CD8-positive, alpha-beta T cell (primary cell): ENCODE measurements at regions of chr1 and their contacts with region 1.

Region 1: GRCh38 chr1:18956369-18957135 is at the start of gene IFFO2:
- DNase-seq: peak; percentile 96 to 100 (median 98)
- ATAC-seq: peak; percentile 82
- H3K4me3 ChIP-seq: peak within 1 kb of the TSS; percentile 66 to 80
- H3K4me3 Mint-ChIP-seq: peak within 1 kb of the TSS; percentile 96
- H3K27ac ChIP-seq: peak within 1 kb of the TSS; percentile 36 to 52
- H3K27ac Mint-ChIP-seq: peak within 1 kb of the TSS; percentile 97
- H3K4me1 ChIP-seq: peaks cover 57% of the 10 kb centered on the region
- H3K4me1 Mint-ChIP-seq: peaks cover 59% of the 10 kb centered on the region
- H3K27me3 ChIP-seq: peaks cover 0 to 2% of the 10 kb centered on the region in 2 experiments
- H3K27me3 Mint-ChIP-seq: no peaks in the 10 kb centered on the region
- CTCF ChIP-seq: no peak
- total RNA-seq, gene IFFO2: 92.6 to 107 TPM

Region 2: DNA sequence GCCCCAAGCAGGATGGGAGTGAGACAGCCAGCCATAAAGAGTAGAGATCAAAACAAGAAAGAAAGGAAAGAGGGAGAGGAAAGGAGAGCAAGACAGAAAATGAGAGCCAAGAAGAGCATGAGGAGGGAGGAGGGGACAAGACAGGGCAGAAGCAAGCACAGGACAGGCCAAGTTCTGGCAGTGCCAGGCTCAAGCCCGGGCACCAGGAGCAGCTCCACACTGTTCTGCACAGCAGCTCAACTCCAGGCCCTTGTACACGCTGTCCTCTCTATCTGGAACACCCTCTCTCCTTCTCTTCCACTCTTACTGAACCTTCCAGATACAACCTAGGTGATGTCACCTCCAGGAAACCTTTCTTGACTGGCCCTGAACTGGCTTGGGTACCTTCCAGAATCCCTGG is 11.7 kb before region 1 on chr1:
- CTCF ChIA-PET with region 1: interaction called, 3 read pairs
- POLR2A ChIA-PET with region 1: interaction called, 12 read pairs
- intact Hi-C with region 1: loop called in 1 of 2 experiments (anchors 1 kb)
- DNase-seq: no peak
- ATAC-seq: no peak
- H3K4me3 ChIP-seq: no peak overlapping the region
- H3K4me3 Mint-ChIP-seq: no peak overlapping the region
- H3K27ac ChIP-seq: no peak overlapping the region
- H3K27ac Mint-ChIP-seq: no peak overlapping the region
- H3K4me1 ChIP-seq: peaks cover 82% of the 10 kb centered on the region
- H3K4me1 Mint-ChIP-seq: peaks cover 86% of the 10 kb centered on the region
- H3K27me3 ChIP-seq: no peaks in the 10 kb centered on the region
- H3K27me3 Mint-ChIP-seq: no peaks in the 10 kb centered on the region
- CTCF ChIP-seq: no peak

Region 3: GRCh38 chr1:18972531-18972930 is 16.0 kb after region 1 on chr1:
- CTCF ChIA-PET with region 1: interaction called, 47 read pairs
- POLR2A ChIA-PET with region 1: interaction called, 7 read pairs
- intact Hi-C with region 1: no loop called
- DNase-seq: peak in 4 of 9 experiments; percentile 27 to 73 (median 52)
- ATAC-seq: peak; percentile 61
- H3K4me3 ChIP-seq: no peak overlapping the region
- H3K4me3 Mint-ChIP-seq: no peak overlapping the region
- H3K27ac ChIP-seq: no peak overlapping the region
- H3K27ac Mint-ChIP-seq: no peak overlapping the region
- H3K4me1 ChIP-seq: peaks cover 3% of the 10 kb centered on the region
- H3K4me1 Mint-ChIP-seq: peaks cover 4% of the 10 kb centered on the region
- H3K27me3 ChIP-seq: no peaks in the 10 kb centered on the region
- H3K27me3 Mint-ChIP-seq: peaks cover 7% of the 10 kb centered on the region
- CTCF ChIP-seq: peak; percentile 59

Region 4: DNA sequence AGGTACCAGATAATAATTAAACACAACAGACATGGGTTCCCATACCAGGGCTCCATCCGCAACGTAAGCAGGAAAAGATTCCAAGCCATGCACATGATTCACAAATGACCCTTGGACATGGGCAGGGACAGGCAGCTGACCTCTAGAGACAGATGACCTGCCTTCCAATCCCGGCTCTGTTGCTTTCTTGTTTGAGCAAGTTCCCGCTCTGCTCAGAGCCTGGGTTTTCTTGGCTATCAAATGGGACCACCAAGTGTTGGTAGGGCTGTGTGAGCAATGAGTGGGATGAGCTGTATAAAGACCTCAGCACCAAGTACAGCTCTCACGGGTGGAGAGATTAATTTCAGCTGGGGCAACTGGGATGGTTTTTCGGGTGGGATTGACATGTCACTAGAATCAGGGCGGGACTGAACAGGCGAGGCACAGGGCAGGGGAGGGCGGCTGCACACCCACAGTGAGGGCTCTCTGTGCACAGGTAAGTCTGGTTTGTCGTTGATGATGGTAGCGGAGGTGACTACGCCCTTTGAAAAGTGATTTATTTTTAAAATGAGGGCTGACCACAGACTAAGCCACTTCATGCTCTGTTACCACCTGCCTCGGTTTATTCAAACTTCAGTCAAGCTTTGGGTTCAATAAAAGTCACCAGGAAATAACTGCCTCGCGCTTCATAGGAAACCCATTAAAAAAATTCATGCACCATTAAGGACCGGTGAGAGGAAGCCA is 57.4 kb after region 1 on chr1:
- CTCF ChIA-PET with region 1: no interaction called
- POLR2A ChIA-PET with region 1: no interaction called
- intact Hi-C with region 1: no loop called
- DNase-seq: peak in 1 of 9 experiments; percentile 19
- ATAC-seq: no peak
- H3K4me3 ChIP-seq: no peak overlapping the region
- H3K4me3 Mint-ChIP-seq: no peak overlapping the region
- H3K27ac ChIP-seq: no peak overlapping the region
- H3K27ac Mint-ChIP-seq: no peak overlapping the region
- H3K4me1 ChIP-seq: peaks cover 17% of the 10 kb centered on the region
- H3K4me1 Mint-ChIP-seq: peaks cover 28% of the 10 kb centered on the region
- H3K27me3 ChIP-seq: peaks cover 0 to 2% of the 10 kb centered on the region in 2 experiments
- H3K27me3 Mint-ChIP-seq: peaks cover 2% of the 10 kb centered on the region
- CTCF ChIP-seq: no peak

Region 5: GRCh38 chr1:19074902-19075721 is 118.6 kb after region 1 on chr1:
- CTCF ChIA-PET with region 1: no interaction called
- POLR2A ChIA-PET with region 1: interaction called, 9 read pairs
- intact Hi-C with region 1: loop called (anchors 2 kb)
- DNase-seq: peak in 1 of 9 experiments; percentile 23
- ATAC-seq: peak; percentile 24
- H3K4me3 ChIP-seq: peak overlapping the region; percentile 16 to 21
- H3K4me3 Mint-ChIP-seq: peak overlapping the region; percentile 56
- H3K27ac ChIP-seq: peak overlapping the region in 1 of 2 experiments; percentile 52
- H3K27ac Mint-ChIP-seq: peak overlapping the region; percentile 69
- H3K4me1 ChIP-seq: peaks cover 46% of the 10 kb centered on the region
- H3K4me1 Mint-ChIP-seq: peaks cover 41% of the 10 kb centered on the region
- H3K27me3 ChIP-seq: no peaks in the 10 kb centered on the region
- H3K27me3 Mint-ChIP-seq: no peaks in the 10 kb centered on the region
- CTCF ChIP-seq: no peak

Region 6: DNA sequence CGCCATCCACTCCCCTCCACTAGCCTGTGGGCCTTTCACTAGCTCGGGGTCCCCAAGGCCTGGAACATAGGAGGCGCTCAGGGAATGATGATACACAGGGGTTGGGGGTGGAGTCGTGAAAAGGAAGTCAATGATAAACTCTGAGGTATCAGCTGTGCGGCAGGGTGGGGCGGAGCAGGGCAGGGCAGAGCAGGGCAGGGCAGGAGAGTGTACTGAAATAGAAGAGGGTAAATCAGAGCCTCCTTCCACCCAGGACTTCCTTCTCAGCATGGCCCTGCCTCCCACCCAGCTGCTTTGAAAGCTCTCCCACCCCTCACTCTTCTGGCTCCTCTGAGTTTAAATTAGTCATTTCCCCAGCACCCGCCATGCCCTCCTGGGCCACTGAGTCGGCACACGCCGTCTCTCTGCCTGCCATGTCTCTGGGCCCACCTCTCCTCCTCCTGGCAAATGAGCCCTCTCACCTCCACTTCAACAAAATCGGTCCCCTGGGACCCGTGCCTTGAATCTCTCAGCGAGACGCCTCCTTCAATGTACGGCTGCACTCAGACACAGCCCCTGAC is 511.9 kb after region 1 on chr1:
- CTCF ChIA-PET with region 1: no interaction called
- POLR2A ChIA-PET with region 1: no interaction called
- intact Hi-C with region 1: loop called (anchors 10 kb)
- DNase-seq: peak; percentile 19 to 85 (median 74)
- ATAC-seq: peak; percentile 85
- H3K4me3 ChIP-seq: peak overlapping the region in 1 of 2 experiments; percentile 41
- H3K4me3 Mint-ChIP-seq: peak overlapping the region; percentile 72
- H3K27ac ChIP-seq: peak overlapping the region; percentile 47 to 69
- H3K27ac Mint-ChIP-seq: peak overlapping the region; percentile 97
- H3K4me1 ChIP-seq: peaks cover 96% of the 10 kb centered on the region
- H3K4me1 Mint-ChIP-seq: peaks cover 91% of the 10 kb centered on the region
- H3K27me3 ChIP-seq: no peaks in the 10 kb centered on the region
- H3K27me3 Mint-ChIP-seq: no peaks in the 10 kb centered on the region
- CTCF ChIP-seq: no peak

Region 7: GRCh38 chr1:19643602-19644394 is 687.2 kb after region 1 on chr1 and contains the start of gene NBL1:
- CTCF ChIA-PET with region 1: no interaction called
- POLR2A ChIA-PET with region 1: no interaction called
- intact Hi-C with region 1: no loop called
- DNase-seq: peak; percentile 58 to 89 (median 77)
- ATAC-seq: peak; percentile 89
- H3K4me3 ChIP-seq: peak within 1 kb of the TSS; percentile 55 to 78
- H3K4me3 Mint-ChIP-seq: peak within 1 kb of the TSS; percentile 98
- H3K27ac ChIP-seq: peak within 1 kb of the TSS in 1 of 2 experiments; percentile 45
- H3K27ac Mint-ChIP-seq: peak within 1 kb of the TSS; percentile 95
- H3K4me1 ChIP-seq: peaks cover 32% of the 10 kb centered on the region
- H3K4me1 Mint-ChIP-seq: peaks cover 33% of the 10 kb centered on the region
- H3K27me3 ChIP-seq: peaks cover 0 to 2% of the 10 kb centered on the region in 2 experiments
- H3K27me3 Mint-ChIP-seq: peaks cover 16% of the 10 kb centered on the region
- CTCF ChIP-seq: no peak
- total RNA-seq, gene NBL1: 76.5 to 80.5 TPM